SK-N-SH (cell line): ENCODE measurements at regions of chr12 and their contacts with region 1.

Region 1: DNA sequence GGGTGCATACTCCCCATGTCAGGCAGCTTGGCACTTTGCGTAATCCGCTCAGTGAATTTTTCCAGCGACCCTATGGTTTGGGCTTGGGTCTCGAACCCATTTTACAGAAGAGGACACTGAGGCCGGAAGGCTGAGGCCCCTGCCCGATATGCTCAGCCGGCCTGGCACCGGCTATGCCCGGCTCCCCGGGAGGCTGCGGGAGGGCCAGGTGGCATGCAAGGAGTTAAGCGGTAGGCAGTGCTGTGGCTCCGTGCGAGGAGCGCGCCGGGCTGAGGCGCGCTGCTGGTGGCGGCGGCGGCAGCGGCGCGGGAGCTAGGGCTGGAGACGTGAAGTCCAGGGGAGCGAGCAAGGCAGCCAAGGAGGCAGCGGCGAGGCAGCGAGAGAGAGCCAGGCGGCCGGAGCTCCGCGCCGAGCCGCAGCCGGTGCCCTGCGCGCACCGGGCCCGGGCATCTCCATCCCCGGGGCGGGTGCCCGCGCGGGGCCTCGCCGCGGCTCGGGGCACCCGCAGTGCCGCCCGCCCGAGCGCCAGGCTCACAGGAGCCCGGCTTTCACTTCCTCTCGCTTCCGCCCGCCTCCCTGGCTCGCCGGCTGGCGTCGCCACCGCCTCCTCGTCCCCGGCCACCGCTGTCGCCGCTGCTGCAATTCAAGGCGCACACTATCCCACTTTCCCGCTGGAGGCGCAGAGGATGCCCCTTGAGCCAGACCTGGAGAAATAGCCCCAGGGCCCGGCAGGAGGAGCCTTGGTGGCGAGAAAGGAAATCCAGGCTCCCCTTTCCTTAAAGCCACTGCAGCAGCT is at the start of gene WSCD2:
- DNase-seq: peak; percentile 90
- H3K4me3 ChIP-seq: peak within 1 kb of the TSS in 1 of 2 experiments; percentile 48; a peak in 3 of 4 replicates
- H3K27ac ChIP-seq: peak within 1 kb of the TSS in 1 of 2 experiments; percentile 69; a peak in 2 of 4 replicates
- H3K4me1 ChIP-seq: peaks cover 0 to 26% of the 10 kb centered on the region in 2 experiments; a peak in 1 of 4 replicates
- H3K27me3 ChIP-seq: no peaks in the 10 kb centered on the region
- CTCF ChIP-seq: no peak
- EP300 ChIP-seq: no peak
- RAD21 ChIP-seq: peak; percentile 53
- polyA plus RNA-seq, gene WSCD2: 0.03 and 0.05 TPM in 2 replicates

Region 2: DNA sequence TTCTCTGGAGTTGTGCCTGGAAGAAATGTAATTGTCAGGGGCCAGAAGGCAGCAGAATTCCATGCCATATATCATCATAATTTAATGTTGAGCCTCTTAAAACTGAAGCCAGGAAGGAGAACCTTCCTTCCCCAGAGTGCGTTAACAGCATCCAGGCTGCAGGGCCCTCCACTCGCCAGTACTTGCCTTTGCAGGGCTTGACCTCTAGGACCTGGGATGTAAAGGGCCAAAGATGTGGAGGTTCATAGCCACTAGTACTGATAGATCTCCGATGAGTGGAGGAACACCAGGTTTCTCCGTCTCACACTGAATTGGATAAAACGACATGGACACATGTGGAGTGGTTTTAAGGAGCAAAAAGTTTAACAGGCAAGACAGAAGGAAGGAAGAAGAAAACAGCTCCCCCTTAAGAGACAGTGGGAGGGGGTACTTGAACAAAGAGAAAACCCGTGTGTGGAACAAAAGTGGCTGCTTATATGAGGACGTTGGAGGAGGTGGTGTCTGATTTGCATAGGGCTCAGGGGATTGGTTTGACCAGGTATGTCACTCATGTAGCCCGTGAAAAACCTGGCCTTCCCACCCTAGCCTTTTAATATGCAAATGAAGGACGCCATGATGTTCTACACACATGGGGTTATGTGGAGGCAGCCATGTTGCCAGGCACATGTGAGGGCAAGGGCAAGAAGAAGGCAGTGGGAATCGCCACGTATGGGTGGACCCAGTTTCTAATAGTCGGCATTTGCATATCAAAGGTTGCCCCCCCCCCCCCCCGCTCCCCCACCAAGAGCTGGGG is 38.9 kb before region 1 on chr12:
- CTCF ChIA-PET with region 1: no interaction called
- POLR2A ChIA-PET with region 1: no interaction called
- DNase-seq: no peak
- H3K4me3 ChIP-seq: no peak overlapping the region
- H3K27ac ChIP-seq: peak overlapping the region in 1 of 2 experiments; percentile 16; a peak in 1 of 4 replicates
- H3K4me1 ChIP-seq: peaks cover 0 to 13% of the 10 kb centered on the region in 2 experiments; a peak in 1 of 4 replicates
- H3K27me3 ChIP-seq: no peaks in the 10 kb centered on the region
- CTCF ChIP-seq: no peak
- EP300 ChIP-seq: no peak
- RAD21 ChIP-seq: no peak

Region 3: DNA sequence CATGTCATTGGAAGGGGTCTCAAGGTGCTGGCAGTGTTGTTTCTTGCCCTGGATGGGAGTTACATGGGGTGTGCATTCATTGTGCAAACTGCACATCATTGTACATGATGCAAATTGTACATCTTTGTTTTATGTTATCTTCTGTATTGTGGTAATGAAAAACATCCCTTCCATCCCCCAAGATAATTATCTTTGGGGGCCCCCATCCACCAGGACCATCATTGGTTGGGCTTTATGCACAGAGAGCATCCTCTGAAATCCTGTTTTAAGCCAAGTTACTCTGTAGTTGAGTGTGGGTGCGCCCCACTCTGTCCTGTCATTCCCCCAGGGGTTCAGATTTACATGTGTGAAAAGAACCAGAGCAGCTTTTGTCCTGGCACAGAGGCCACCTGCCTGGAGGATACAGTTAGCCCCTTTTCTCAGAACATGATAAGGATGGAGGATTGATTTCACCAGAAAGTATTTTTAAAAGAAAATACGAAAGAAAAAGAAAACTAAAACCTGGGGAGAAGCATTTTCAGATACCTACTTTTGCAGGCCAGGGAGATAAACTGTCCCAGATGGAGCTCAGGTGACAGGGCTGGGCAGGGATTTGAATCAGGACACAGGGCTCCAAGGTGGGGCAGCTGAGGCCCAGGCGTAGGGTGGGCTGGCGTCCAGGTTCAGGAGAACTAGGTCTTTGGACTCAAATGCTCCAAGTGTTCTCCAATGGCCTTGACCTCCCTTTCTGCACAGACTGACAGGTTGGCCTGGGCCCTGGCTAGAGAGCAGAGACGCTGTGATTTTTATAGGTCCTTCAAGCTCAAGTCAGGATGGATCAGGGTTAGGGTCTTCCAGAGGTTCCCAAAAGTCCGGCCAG is 17.0 kb after region 1 on chr12:
- CTCF ChIA-PET with region 1: interaction called, 33 read pairs
- POLR2A ChIA-PET with region 1: interaction called, 3 read pairs
- DNase-seq: peak; percentile 65
- H3K4me3 ChIP-seq: no peak overlapping the region
- H3K27ac ChIP-seq: peak overlapping the region in 1 of 2 experiments; percentile 67; a peak in 2 of 4 replicates
- H3K4me1 ChIP-seq: peaks cover 0 to 15% of the 10 kb centered on the region in 2 experiments; a peak in 2 of 4 replicates
- H3K27me3 ChIP-seq: no peaks in the 10 kb centered on the region
- CTCF ChIP-seq: no peak
- EP300 ChIP-seq: no peak; a peak in 1 of 4 replicates
- RAD21 ChIP-seq: no peak

Region 4: DNA sequence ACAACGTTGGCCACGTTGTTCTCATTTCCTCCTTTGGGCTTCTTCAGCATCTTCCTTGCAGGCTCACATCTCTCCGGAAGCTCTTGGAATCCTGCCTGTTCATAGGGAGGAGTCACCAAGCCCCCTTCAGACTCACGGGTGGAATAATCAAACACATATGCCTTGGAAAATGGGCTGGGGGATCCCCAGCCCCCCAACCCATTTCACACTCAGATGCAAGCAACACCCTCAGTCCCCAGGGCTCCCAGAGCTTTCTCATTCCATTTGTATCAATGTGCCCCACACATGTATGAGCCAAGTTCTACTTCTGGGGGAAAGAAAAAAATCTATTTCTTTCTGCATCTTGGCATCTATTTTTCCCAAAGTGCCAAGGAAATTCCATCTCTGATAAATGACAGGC is 33.0 kb after region 1 on chr12:
- CTCF ChIA-PET with region 1: no interaction called
- POLR2A ChIA-PET with region 1: no interaction called
- DNase-seq: no peak
- H3K4me3 ChIP-seq: no peak overlapping the region
- H3K27ac ChIP-seq: no peak overlapping the region
- H3K4me1 ChIP-seq: no peaks in the 10 kb centered on the region; a peak in 1 of 4 replicates
- H3K27me3 ChIP-seq: no peaks in the 10 kb centered on the region
- CTCF ChIP-seq: no peak
- EP300 ChIP-seq: no peak
- RAD21 ChIP-seq: no peak

Region 5: GRCh38 chr12:108180255-108181094 is 51.3 kb after region 1 on chr12:
- CTCF ChIA-PET with region 1: interaction called, 11 read pairs
- POLR2A ChIA-PET with region 1: interaction called, 3 read pairs
- DNase-seq: no peak
- H3K4me3 ChIP-seq: no peak overlapping the region
- H3K27ac ChIP-seq: no peak overlapping the region
- H3K4me1 ChIP-seq: peaks cover 0 to 3% of the 10 kb centered on the region in 2 experiments; a peak in 1 of 4 replicates
- H3K27me3 ChIP-seq: no peaks in the 10 kb centered on the region
- CTCF ChIP-seq: no peak
- EP300 ChIP-seq: no peak
- RAD21 ChIP-seq: no peak